IMR-90 (cell line): ENCODE measurements at regions of chr9 and their contacts with region 1.

Region 1: DNA sequence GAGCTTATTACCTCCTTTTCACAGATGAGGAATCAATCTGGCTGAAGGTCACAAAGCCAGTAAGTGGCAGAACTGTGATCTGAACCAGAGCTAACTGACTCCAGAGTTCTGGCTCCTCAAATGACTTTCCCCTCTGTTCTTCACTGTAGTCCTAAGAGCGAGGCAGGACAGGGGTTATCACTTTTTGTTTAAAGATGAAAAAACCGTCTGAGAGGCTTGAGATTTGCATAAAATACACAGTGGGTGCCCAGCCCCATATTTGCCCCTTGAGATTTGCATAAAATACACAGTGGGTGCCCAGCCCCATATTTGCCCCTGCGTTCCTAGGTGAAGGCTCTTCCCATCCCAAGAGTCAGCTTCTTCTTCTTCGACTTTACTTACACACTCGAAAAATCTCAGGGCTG is 667 bp downstream of the FBXO10 start:
- DNase-seq: no peak
- ATAC-seq: peak; percentile 4
- H3K4me3 ChIP-seq: peak overlapping the region; percentile 73
- H3K27ac ChIP-seq: peak overlapping the region; percentile 72
- H3K4me1 ChIP-seq: peaks cover 11% of the 10 kb centered on the region
- H3K27me3 ChIP-seq: no peaks in the 10 kb centered on the region
- CTCF ChIP-seq: no peak
- POLR2A ChIP-seq: no peak
- RAD21 ChIP-seq: no peak

Region 2: DNA sequence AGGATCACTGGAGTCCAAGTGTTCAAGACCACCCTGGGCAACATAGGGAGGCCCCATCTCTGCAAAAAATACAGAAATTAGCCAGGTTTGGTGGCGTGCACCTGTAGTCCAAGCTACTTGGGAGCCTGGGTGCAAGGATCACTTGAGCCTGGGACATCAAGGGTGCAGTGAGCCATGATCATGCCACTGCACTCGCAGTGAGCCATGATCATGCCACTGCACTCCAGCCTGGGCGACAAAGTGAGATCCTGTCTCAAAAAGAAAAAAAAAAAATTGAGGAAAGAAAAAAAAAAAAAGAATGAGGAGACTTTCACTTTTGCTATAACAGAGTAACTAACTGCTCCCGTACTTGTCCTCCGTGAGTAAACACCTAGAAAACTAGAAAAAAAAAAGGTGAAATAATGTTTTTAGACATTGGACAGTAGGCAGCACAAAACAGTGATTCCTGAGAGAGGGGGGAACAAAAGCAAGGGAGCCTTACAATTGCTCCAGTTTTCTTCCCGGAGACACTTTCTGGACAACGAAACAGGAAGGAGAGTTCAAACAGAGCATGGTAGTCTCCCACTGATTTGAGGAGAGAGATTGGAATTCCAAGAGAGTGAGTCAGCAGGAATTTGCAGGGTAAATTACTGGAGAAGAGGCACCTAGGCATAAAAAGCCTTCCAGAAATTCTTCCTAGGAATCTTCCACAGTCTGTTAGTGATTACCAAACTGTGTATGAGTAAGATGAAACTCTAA is 103.4 kb before region 1 on chr9:
- CTCF ChIA-PET with region 1: no interaction called
- POLR2A ChIA-PET with region 1: no interaction called
- dilution Hi-C with region 1: no loop called
- in situ Hi-C with region 1: no loop called
- intact Hi-C with region 1: no loop called
- DNase-seq: peak; percentile 95
- ATAC-seq: peak; percentile 96
- H3K4me3 ChIP-seq: peak overlapping the region; percentile 43
- H3K27ac ChIP-seq: peak overlapping the region; percentile 90
- H3K4me1 ChIP-seq: peaks cover 5% of the 10 kb centered on the region
- H3K27me3 ChIP-seq: no peaks in the 10 kb centered on the region; the same call in 1 of the 2 replicates
- CTCF ChIP-seq: no peak
- POLR2A ChIP-seq: no peak
- RAD21 ChIP-seq: no peak

Region 3: DNA sequence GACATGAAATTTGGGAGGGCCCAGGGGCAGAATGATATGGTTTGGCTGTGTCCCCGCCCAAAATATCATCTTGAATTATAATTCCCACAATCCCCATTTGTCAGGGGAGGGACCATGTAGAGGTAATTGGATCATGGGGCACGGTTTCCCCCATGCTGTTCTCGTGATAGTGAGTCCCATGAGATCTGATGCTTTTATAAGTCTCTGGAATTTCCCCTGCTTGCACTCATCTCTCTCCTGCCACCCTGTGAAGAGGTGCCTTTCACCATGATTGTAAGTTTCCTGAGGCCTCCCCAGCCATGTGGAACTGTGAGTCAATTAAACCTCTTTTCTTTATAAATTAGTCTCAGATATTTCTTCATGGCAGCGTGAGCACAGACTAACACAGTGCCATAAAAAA is 10.6 kb before region 1 on chr9:
- CTCF ChIA-PET with region 1: no interaction called
- POLR2A ChIA-PET with region 1: no interaction called
- dilution Hi-C with region 1: no loop called
- in situ Hi-C with region 1: no loop called
- intact Hi-C with region 1: no loop called
- DNase-seq: no peak
- ATAC-seq: no peak
- H3K4me3 ChIP-seq: no peak overlapping the region
- H3K27ac ChIP-seq: no peak overlapping the region
- H3K4me1 ChIP-seq: no peaks in the 10 kb centered on the region
- H3K27me3 ChIP-seq: no peaks in the 10 kb centered on the region
- CTCF ChIP-seq: no peak
- POLR2A ChIP-seq: no peak
- RAD21 ChIP-seq: no peak

Region 4: GRCh38 chr9:37656936-37657335 is 81.4 kb after region 1 on chr9:
- CTCF ChIA-PET with region 1: no interaction called
- POLR2A ChIA-PET with region 1: no interaction called
- dilution Hi-C with region 1: no loop called
- in situ Hi-C with region 1: no loop called
- intact Hi-C with region 1: no loop called
- DNase-seq: no peak
- ATAC-seq: no peak
- H3K4me3 ChIP-seq: no peak overlapping the region
- H3K27ac ChIP-seq: no peak overlapping the region
- H3K4me1 ChIP-seq: no peaks in the 10 kb centered on the region
- H3K27me3 ChIP-seq: peaks cover 71% of the 10 kb centered on the region
- CTCF ChIP-seq: no peak
- POLR2A ChIP-seq: no peak
- RAD21 ChIP-seq: no peak

Region 5: GRCh38 chr9:37938121-37938891 is 362.8 kb after region 1 on chr9:
- CTCF ChIA-PET with region 1: no interaction called
- POLR2A ChIA-PET with region 1: interaction called, 13 read pairs
- dilution Hi-C with region 1: no loop called
- in situ Hi-C with region 1: no loop called
- intact Hi-C with region 1: no loop called
- DNase-seq: peak; percentile 93
- ATAC-seq: peak; percentile 69
- H3K4me3 ChIP-seq: no peak overlapping the region
- H3K27ac ChIP-seq: peak overlapping the region; percentile 92
- H3K4me1 ChIP-seq: peaks cover 40% of the 10 kb centered on the region
- H3K27me3 ChIP-seq: no peaks in the 10 kb centered on the region
- CTCF ChIP-seq: no peak
- POLR2A ChIP-seq: peak; percentile 19; the same call in 1 of the 2 replicates
- RAD21 ChIP-seq: 0 out of 2 replicates have a peak, but pooled peaks have one; percentile 5